ENCODE measurements at regions of chr9 and their contacts with region 1.

Region 1: GRCh38 chr9:103514767-103515166 is 519.6 kb downstream of the CYLC2 start:
- DNase-seq: no peak
- ATAC-seq: no peak
- H3K4me3 ChIP-seq: no peak overlapping the region
- H3K4me3 Mint-ChIP-seq: no peak overlapping the region
- H3K27ac ChIP-seq: no peak overlapping the region
- H3K27ac Mint-ChIP-seq: no peak overlapping the region
- H3K4me1 ChIP-seq: no peaks in the 10 kb centered on the region
- H3K4me1 Mint-ChIP-seq: no peaks in the 10 kb centered on the region
- H3K27me3 ChIP-seq: no peaks in the 10 kb centered on the region
- H3K27me3 Mint-ChIP-seq: no peaks in the 10 kb centered on the region
- CTCF ChIP-seq: no peak

Region 2: DNA sequence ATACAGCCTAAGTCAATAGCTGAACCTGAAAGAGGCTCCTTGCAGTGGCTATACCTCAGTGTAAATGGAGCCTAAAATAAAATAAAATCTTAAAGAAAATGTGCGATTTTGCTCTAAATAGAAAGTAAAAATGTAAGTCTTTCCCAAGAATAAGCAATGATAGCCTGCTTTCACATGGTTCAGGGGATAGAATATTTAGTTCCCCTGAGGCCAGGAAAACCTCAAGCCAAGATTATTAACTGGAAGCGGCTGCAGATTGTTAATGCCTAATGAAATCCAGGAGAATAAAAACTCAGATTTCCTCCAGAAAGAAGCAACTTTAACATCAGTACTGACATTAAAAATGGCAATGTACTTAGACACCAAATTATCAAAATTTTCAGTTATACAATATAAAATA is 55.9 kb before region 1 on chr9:
- intact Hi-C with region 1: loop called (anchors 10 kb)
- DNase-seq: no peak
- ATAC-seq: no peak
- H3K4me3 ChIP-seq: no peak overlapping the region
- H3K4me3 Mint-ChIP-seq: no peak overlapping the region
- H3K27ac ChIP-seq: no peak overlapping the region
- H3K27ac Mint-ChIP-seq: no peak overlapping the region
- H3K4me1 ChIP-seq: no peaks in the 10 kb centered on the region
- H3K4me1 Mint-ChIP-seq: no peaks in the 10 kb centered on the region
- H3K27me3 ChIP-seq: no peaks in the 10 kb centered on the region
- H3K27me3 Mint-ChIP-seq: no peaks in the 10 kb centered on the region
- CTCF ChIP-seq: no peak

Region 3: GRCh38 chr9:103530934-103531333 is 16.2 kb after region 1 on chr9:
- intact Hi-C with region 1: no loop called
- DNase-seq: no peak
- ATAC-seq: no peak
- H3K4me3 ChIP-seq: no peak overlapping the region
- H3K4me3 Mint-ChIP-seq: no peak overlapping the region
- H3K27ac ChIP-seq: no peak overlapping the region
- H3K27ac Mint-ChIP-seq: no peak overlapping the region
- H3K4me1 ChIP-seq: no peaks in the 10 kb centered on the region
- H3K4me1 Mint-ChIP-seq: no peaks in the 10 kb centered on the region
- H3K27me3 ChIP-seq: no peaks in the 10 kb centered on the region
- H3K27me3 Mint-ChIP-seq: no peaks in the 10 kb centered on the region
- CTCF ChIP-seq: no peak

Measured in natural killer cell (primary cell).